Ascending aorta (tissue), 2 donors: ENCODE measurements at regions of chr1 and their contacts with region 1.

Region 1: DNA sequence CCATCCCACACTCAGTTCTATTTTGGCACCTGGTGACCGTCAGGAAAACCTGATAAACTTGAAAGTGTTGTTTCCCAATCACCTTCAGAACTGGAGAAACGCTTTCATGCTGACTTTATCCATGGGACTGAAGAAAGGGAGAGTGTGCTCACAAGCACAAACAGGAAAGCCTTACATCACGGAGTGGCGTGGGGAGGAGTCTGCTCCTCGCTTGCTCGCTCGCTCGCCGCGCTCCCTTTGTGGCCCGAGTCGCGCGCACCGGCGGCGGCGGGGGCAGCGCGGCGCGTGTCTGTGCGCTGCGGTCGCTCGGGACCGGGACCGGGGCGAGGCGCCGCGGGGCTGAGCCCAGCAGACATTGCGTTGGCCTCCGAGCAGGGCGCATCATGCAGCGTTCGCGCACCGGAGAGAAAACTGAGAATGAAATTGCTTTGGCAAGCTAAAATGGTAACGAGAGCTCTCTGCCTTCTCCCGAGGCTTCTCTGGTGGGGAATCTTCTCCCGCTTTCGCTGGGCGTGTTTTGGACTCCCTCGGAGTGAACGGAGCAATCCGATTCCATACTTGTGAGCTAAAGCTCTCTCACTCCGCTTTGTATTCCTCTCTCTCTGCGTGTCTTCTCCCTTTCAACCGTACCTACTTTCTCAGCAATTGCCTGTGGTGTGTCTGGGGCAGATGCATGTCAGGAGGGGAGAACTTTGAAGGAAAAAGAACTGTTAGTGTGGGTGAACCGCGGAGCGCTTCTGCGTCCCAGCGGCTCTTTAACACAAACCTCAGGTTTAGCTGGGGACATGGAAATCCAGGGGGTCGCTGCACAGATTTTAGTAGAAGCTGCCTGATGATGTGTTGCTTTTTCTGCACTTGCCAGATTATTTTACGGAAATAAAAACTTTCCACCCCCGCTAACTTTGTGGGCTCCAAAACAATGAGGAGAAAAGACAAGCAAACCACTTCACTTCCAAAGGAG is at the start of gene RGL1:
- DNase-seq: peak in 1 of 2 donors; percentile 82
- H3K4me3 ChIP-seq: peak within 1 kb of the TSS; percentile 87 to 91
- H3K27ac ChIP-seq: peak within 1 kb of the TSS; percentile 63 to 68
- H3K4me1 ChIP-seq: peaks cover 0 to 14% of the 10 kb centered on the region in 2 donors
- H3K27me3 ChIP-seq: no peaks in the 10 kb centered on the region
- CTCF ChIP-seq: no peak
- total RNA-seq, gene RGL1: 23.1 TPM

Region 2: DNA sequence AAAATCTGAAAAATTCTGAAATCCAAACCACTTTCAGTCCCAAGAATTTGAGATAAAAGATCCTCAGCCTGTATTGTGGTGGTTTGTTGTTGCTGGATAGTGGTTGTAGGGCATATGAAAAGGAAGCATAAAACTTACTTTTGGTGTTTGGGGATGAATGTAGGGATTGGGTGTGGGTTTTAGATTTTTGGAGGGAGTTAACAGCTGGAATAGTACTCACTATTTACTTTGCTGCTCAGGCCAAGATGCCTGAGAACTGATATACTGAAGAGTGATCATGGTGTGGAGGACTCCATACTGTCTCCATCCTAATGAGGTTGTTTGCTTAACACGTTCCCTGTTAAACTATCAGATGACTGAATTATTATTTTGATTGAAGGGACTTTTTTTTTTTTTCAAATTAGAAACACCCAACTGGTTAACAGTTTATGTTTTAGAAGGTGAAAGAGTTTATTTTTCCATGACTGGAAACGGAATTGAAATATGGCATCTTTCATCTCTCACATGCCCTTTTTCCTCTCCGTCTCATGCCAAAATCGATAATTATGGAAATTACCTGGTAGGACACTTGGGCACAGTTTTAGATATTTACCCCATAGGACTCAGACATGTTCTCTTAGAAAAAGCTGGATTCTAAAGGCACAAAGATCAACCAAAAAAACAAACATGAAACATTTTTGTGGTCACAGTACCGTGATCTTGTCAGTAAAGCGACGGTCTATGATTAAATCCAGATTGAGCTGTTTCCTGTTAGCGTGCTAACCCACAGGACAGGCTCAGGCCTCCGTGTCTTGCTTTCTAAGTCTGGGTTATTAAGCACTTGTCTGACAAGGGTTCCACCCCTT is 37.0 kb after region 1 on chr1:
- intact Hi-C with region 1: loop called (anchors 5 kb)
- DNase-seq: no peak
- H3K4me3 ChIP-seq: peak overlapping the region; percentile 3 to 34
- H3K27ac ChIP-seq: peak overlapping the region; percentile 44 to 51
- H3K4me1 ChIP-seq: peaks cover 0 to 14% of the 10 kb centered on the region in 2 donors
- H3K27me3 ChIP-seq: no peaks in the 10 kb centered on the region
- CTCF ChIP-seq: no peak